ENCODE measurements at regions of chr20 and their contacts with region 1.

Region 1: DNA sequence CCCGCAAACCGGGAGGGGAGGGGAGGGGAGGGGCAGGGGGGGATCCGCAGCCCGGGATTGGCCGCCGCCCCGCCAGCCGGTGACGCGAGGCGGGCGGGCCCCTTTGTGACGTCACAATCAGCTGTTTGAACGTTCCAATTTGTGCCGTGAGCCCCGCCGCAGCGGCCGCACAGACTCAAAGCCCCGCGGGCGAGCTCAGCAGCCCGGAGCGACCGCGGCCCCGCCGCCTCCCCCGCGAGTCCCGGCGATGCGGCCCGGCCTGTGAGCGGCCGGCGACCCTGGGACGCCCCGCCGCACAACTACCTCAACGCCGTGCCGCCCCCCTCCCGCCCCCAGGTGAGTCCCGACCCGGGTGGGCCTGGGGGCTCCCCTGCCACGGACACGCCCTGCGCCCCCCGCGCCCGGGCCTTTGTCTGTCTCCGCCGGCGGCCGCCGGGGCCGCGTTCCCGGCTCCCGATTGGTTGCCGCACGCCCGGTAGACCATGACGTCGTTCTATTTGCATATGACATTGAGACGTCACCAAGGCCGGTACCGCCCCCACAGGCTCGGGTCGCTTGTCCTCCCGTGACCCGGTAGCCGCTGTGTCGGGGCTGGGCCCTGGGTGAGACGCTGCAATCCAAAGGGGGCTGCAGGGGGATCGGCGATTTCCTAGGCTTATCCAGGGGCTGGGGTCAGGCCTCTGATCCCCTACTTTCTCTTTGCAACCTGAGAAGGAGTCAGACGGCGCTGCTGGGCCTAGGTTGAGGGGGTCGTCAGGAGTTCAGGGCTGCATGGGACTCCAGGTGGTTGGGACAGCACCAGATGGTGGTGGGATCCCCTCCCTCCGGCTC is at the start of gene TP53INP2:
- DNase-seq: peak; percentile 92
- CTCF ChIP-seq: no peak

Region 2: GRCh38 chr20:34538671-34539123 is 165.7 kb before region 1 on chr20:
- in situ Hi-C with region 1: loop called (anchors 10 kb)
- DNase-seq: peak; percentile 76
- CTCF ChIP-seq: peak; percentile 86